ENCODE measurements at regions of chr16 and their contacts with region 1.

Region 1: GRCh38 chr16:69796351-69797118 is 34.4 kb downstream of the WWP2 start:
- DNase-seq: peak; percentile 75
- H3K4me3 Mint-ChIP-seq: no peak overlapping the region
- H3K27ac Mint-ChIP-seq: no peak overlapping the region
- H3K4me1 Mint-ChIP-seq: peaks cover 6% of the 10 kb centered on the region
- H3K27me3 Mint-ChIP-seq: no peaks in the 10 kb centered on the region
- CTCF ChIP-seq: peak; percentile 70

Region 2: GRCh38 chr16:69812688-69813014 is 16.1 kb after region 1 on chr16:
- CTCF ChIA-PET with region 1: interaction called, 14 read pairs
- POLR2A ChIA-PET with region 1: interaction called, 3 read pairs
- intact Hi-C with region 1: no loop called
- DNase-seq: no peak
- H3K4me3 Mint-ChIP-seq: no peak overlapping the region
- H3K27ac Mint-ChIP-seq: no peak overlapping the region
- H3K4me1 Mint-ChIP-seq: no peaks in the 10 kb centered on the region
- H3K27me3 Mint-ChIP-seq: no peaks in the 10 kb centered on the region
- CTCF ChIP-seq: no peak

Region 3: DNA sequence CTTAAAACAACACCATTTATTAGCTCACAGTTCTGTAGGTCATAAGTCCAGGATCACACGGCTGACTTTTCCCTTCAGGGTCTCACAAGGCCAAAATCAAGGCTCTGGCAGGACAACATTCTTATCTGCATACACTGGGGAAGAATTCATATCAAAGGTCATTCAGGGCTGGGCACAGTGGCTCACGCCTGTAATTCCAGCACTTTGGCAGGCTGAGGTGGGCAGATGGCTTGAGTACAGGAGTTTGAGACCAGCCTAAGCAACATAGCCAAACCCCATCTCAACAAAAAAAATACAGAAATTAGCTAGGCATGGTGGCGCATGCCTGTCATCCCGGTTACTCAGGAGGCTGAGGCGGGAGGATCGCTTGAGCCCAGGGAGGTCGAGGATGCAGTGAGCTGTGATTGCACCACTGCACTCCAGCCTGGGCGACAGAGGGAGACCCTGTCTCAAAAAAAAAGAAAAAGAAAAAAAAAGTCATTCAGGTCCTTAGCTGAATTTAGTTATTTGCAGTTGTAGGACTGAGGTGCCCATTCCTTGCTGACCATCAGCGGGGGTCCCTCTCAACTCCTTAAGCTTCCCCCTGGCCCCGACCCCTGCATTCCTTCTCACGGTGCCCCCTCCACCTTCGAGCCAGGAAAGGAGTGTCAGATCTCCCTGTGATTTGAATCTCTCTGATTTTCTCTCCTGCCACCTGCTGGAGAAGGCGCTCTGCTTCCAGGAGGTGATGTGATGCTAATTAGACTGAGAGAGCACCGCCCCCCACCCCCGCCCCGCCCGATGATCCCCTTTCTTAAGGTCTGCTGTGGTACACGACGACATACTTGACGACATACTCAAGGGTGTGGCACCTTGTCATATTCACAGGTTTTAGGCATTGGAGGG is 62.8 kb after region 1 on chr16:
- CTCF ChIA-PET with region 1: interaction called, 8 read pairs
- POLR2A ChIA-PET with region 1: no interaction called
- intact Hi-C with region 1: loop called (anchors 1 kb)
- DNase-seq: peak; percentile 56
- H3K4me3 Mint-ChIP-seq: no peak overlapping the region
- H3K27ac Mint-ChIP-seq: no peak overlapping the region
- H3K4me1 Mint-ChIP-seq: peaks cover 6% of the 10 kb centered on the region
- H3K27me3 Mint-ChIP-seq: no peaks in the 10 kb centered on the region
- CTCF ChIP-seq: peak; percentile 42

Region 4: GRCh38 chr16:69894676-69895075 is 98.1 kb after region 1 on chr16:
- CTCF ChIA-PET with region 1: no interaction called
- POLR2A ChIA-PET with region 1: no interaction called
- intact Hi-C with region 1: no loop called
- DNase-seq: no peak
- H3K4me3 Mint-ChIP-seq: no peak overlapping the region
- H3K27ac Mint-ChIP-seq: no peak overlapping the region
- H3K4me1 Mint-ChIP-seq: no peaks in the 10 kb centered on the region
- H3K27me3 Mint-ChIP-seq: no peaks in the 10 kb centered on the region
- CTCF ChIP-seq: no peak

Measured in MCF 10A (cell line).